Lower lobe of right lung (tissue), 2 donors: ENCODE measurements at regions of chr17 and their contacts with region 1.

Region 1: DNA sequence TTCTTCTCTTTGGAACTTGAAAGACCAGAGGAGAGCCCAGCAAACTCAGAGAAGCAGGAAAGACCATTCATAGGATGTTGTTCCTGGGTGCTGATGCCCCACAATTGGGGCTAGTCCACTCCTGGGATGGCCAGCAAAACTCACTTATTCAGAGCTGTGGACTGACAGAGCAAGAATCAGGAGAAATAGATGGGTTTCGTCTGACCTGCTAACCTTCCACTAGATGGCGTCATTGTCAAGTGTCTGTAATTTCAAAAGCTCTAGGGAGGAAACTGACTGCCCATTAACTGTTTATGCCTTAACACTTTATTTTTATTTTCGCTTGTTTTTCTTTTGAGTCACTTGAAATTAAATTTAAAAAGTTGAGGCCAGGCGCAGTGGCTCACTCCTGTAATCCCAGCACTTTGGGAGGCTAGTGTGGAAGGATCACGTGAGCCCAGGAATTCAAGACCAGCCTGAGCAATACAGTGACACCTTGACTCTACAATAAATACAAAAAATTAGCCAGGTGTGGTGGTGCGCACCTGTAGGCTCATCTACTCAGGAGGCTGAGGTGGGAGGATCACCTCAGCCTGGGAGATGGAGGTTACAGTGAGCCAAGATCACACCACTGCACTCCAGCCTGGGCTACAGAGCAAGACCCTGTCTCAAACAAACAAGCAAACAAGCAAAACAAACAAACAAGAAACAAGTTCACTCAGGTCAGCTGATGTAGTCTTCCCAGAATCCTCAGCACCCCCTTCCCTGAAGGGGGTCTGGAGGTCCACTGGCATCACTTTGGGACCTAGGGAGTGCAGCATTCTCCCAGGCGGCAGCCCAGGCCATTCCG is 28.6 kb upstream of the MILR1 start:
- DNase-seq: no peak
- ATAC-seq: peak; percentile 86 to 88
- H3K4me3 ChIP-seq: no peak overlapping the region
- H3K27ac ChIP-seq: no peak overlapping the region
- H3K4me1 ChIP-seq: peaks cover 14% of the 10 kb centered on the region
- H3K27me3 ChIP-seq: no peaks in the 10 kb centered on the region
- CTCF ChIP-seq: peak; percentile 83

Region 2: DNA sequence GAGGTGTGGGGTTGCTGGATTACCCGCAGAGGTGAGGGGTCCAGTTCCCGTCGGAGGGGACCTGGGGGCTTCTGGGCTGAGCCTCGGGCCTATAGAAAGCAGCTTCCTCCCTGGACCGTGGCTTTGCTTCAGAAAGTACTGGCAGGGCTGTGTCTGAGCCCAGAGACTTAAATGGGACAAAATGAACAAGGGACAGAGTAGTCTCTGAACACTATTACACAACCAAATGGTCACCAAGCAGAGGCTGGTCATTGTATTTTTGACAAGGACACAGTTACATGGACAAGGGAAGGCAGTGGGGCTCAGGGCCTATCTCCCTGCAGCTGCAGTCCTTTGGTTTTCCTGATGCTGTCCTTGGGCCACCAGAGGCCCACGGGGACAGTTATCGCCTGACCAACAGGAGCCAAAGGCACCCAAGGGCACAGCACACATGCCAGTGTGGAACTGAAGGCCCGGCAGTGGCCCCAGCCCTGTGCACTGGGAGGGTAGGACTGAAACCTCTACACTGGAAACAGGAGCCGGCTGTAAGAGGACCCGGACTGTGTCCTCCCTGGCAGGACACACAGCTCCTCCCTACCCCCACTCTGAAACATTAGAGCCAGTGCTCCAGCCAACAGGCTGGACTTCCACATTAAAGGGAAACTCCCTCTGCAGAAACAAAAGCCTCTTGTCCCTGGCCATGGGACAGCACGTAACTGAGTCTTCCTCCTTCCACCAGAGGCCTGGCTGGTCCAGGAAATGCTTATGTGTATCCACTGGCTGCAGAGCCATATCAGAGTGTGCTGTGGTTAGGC is 264.4 kb before region 1 on chr17:
- intact Hi-C with region 1: no loop called
- DNase-seq: no peak
- ATAC-seq: peak; percentile 64 to 76
- H3K4me3 ChIP-seq: no peak overlapping the region
- H3K27ac ChIP-seq: peak overlapping the region; percentile 81
- H3K4me1 ChIP-seq: peaks cover 62% of the 10 kb centered on the region
- H3K27me3 ChIP-seq: no peaks in the 10 kb centered on the region
- CTCF ChIP-seq: no peak

Region 3: DNA sequence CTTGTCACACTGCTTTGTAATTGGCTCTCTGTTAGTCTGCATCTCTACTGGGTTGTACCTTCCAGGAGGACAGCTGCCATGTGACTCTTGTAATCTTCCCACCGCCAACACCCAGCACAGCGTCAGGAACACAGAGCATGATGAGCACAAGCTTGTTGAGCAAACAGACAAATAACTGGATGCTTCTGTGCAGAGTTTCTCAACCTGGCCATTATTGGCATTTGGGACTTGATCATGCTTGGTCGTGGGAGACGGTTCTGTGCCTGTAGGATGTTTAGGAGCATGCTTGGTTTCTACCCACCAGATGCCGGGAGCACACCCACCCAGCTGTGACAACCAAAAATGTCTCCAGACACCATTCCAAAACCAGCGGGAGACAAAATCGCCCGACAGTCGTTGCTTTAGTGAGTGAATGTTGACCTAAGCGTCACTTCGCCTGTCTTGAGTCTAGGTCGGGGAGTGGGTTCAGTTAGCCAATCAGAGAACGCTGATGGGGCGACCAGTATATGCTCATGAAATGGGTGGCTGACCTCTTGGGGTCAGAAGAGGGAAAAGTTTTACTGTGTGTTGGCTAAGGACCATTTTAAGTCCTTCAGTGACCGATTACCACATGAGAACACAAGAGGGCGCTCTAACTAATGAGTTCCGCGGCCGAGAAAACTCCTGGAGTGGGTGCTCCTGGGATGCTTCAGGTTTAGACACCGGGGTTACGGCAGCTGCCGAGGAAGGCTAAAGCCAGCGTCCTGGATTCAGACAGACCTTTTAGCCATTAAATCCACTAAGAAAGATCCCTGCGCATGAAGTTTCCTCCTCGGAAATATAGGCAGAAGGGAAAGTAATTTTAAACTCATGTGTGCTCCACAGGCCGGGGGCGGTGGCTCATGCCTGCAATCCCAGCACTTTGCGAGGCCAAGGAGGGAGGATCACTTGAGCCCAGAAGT is 99.5 kb before region 1 on chr17:
- intact Hi-C with region 1: loop called (anchors 10 kb)
- DNase-seq: peak; percentile 61
- ATAC-seq: peak; percentile 78 to 84
- H3K4me3 ChIP-seq: peak overlapping the region; percentile 7
- H3K27ac ChIP-seq: peak overlapping the region; percentile 31
- H3K4me1 ChIP-seq: peaks cover 50% of the 10 kb centered on the region
- H3K27me3 ChIP-seq: no peaks in the 10 kb centered on the region
- CTCF ChIP-seq: peak; percentile 82

Region 4: DNA sequence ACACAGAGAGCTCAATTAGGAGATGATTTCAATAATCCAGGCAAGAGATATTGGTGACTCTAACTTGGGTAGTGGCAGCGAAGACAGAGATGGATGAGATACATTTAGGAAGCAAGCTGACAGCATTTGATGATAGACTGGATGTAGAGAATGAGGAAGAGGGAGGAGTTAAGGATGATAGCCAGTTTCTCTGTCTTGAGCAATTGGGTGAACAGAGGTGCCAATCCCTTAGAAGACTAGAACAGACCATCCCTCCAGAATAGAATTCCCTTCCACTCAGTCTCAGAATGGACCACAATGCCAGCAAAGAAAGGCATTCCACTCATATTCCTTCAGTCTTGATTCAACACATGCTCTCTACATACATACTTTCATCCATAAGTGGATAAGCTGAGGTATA is 59.3 kb after region 1 on chr17:
- intact Hi-C with region 1: loop called (anchors 10 kb)
- DNase-seq: no peak
- ATAC-seq: no peak
- H3K4me3 ChIP-seq: no peak overlapping the region
- H3K27ac ChIP-seq: no peak overlapping the region
- H3K4me1 ChIP-seq: no peaks in the 10 kb centered on the region
- H3K27me3 ChIP-seq: no peaks in the 10 kb centered on the region
- CTCF ChIP-seq: no peak

Region 5: GRCh38 chr17:64572638-64573154 is 152.3 kb after region 1 on chr17:
- intact Hi-C with region 1: no loop called
- DNase-seq: no peak
- ATAC-seq: peak in 1 of 2 donors; percentile 25
- H3K4me3 ChIP-seq: no peak overlapping the region
- H3K27ac ChIP-seq: no peak overlapping the region
- H3K4me1 ChIP-seq: peaks cover 14% of the 10 kb centered on the region
- H3K27me3 ChIP-seq: no peaks in the 10 kb centered on the region
- CTCF ChIP-seq: no peak